Mammary epithelial cell (primary cell): ENCODE measurements at regions of chr11 and their contacts with region 1.

Region 1: DNA sequence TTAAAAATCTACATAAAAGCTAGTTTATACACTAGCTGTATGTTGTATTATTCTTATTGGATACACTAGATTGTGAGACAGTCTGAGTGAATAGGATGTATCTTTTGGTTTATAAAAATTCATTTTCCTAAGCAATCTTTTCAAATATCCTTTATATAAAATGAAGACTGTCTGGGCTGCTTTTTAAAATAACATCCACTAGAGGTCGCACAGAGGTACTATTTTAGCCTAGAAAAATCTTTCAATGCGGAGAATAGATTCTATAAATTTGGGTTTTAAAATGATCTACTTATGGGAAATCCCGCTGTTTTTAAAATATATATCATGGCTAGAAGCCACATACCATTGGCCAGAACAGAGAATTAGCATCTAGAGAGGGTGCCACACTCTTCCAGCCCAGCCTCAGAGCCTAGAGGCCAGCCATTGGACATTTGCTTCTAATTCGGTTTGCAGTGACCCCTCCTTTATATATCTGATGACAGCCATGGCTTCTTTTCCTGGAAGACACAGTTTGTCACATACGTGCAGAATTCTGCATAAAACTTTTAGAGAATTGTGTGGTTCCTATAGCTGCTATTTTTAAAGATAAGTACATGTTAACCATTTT is 7.3 kb downstream of the C11orf97 start:
- DNase-seq: no peak
- H3K4me3 ChIP-seq: no peak overlapping the region
- H3K27ac ChIP-seq: no peak overlapping the region
- H3K4me1 ChIP-seq: peaks cover 2% of the 10 kb centered on the region
- H3K27me3 ChIP-seq: no peaks in the 10 kb centered on the region
- CTCF ChIP-seq: peak; percentile 47 to 56

Region 2: DNA sequence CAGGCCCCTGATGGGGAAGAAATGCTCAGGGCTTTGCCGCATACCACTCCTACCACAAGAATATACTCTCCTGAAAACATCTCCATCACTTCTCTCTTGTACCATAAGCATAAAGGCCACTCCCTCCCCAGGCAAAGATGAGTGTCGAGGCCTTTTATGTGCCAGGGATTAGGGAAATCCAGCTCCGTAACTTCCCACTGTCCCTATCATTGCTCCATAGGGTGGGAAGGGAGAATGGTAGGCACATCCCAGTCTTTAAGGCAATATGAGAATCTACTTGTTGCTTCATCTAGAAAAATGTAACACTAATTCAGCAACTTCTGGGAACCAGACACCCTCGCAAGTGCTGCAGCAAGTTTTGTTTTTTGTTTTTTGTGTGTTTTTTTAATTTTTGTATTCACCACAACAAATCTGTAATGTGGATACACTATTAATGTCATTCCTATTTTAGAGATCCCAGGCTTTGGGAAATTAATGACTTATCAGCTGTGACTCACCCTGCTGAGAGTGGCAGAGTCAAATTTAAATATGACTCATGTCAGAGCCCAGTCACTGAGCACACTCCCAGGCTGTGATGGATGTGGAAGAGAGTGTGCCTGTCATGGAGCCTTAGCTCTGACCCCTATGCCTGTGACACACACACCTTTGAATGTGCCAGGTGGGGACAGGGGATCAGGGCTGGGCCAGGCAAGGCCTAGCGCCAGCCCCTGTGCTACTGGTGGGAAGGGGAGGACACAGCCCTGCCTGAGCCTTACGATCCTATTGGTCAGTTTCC is 367.5 kb before region 1 on chr11:
- CTCF ChIA-PET with region 1: no interaction called
- dilution Hi-C with region 1: no loop called
- in situ Hi-C with region 1: no loop called
- intact Hi-C with region 1: no loop called
- DNase-seq: peak; percentile 87
- H3K4me3 ChIP-seq: no peak overlapping the region
- H3K27ac ChIP-seq: no peak overlapping the region
- H3K4me1 ChIP-seq: peaks cover 54% of the 10 kb centered on the region
- H3K27me3 ChIP-seq: no peaks in the 10 kb centered on the region
- CTCF ChIP-seq: no peak

Region 3: DNA sequence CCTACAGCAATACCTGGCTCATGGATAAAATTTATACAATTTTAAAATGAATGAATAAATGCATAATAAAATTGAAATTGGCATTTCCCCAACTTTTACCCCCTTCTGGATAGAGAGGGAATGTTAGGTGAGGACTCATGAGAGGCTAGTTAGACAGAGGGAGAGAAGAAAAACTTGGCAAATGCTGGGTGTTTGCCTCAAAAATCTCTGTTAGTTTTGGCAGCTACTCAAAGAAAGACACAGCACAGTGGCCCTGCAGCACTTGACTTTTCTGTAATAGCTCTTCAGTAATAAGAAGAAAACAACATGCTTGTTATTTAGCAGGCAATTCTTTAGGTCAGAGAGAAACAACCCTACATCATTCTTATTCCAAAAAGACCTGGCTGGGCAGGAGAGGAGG is 235.9 kb before region 1 on chr11:
- CTCF ChIA-PET with region 1: interaction called, 13 read pairs
- dilution Hi-C with region 1: no loop called
- in situ Hi-C with region 1: no loop called
- intact Hi-C with region 1: no loop called
- DNase-seq: no peak
- H3K4me3 ChIP-seq: no peak overlapping the region
- H3K27ac ChIP-seq: no peak overlapping the region
- H3K4me1 ChIP-seq: no peaks in the 10 kb centered on the region
- H3K27me3 ChIP-seq: peaks cover 7% of the 10 kb centered on the region
- CTCF ChIP-seq: no peak

Region 4: DNA sequence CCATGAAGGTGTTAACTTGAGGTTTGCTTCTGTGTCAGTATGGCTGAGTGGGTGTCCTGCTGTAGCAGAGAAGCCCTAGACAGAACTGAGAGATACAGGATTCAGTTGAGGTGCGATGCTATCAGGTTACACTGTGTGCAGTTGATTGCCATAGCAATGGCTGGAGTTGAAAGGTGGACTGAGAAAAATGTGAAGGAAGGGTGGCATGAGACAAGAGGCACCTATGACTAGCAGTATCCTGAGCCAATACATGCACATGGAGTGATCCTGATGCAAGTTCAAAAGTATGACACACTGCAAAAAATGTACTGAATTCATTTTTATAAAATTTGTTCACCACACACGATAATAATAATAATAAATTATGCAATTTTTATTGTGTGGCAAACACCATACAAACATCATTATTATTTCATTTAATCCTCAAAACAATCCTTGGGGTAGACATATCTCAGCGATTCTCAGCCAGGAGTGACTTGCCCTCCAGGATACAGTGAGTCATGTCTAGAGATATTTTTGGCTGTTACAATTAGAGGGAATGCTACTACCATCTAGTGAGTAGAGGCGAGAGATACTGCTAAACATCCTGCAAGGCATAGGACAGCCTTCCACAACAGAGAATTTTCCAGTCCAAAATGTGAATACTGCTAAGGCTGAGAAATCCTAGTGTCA is 43.7 kb after region 1 on chr11:
- CTCF ChIA-PET with region 1: no interaction called
- dilution Hi-C with region 1: no loop called
- in situ Hi-C with region 1: no loop called
- intact Hi-C with region 1: loop called (anchors 1 kb)
- DNase-seq: peak; percentile 67
- H3K4me3 ChIP-seq: no peak overlapping the region
- H3K27ac ChIP-seq: peak overlapping the region; percentile 5
- H3K4me1 ChIP-seq: peaks cover 12% of the 10 kb centered on the region
- H3K27me3 ChIP-seq: no peaks in the 10 kb centered on the region
- CTCF ChIP-seq: peak; percentile 45 to 56

Region 5: DNA sequence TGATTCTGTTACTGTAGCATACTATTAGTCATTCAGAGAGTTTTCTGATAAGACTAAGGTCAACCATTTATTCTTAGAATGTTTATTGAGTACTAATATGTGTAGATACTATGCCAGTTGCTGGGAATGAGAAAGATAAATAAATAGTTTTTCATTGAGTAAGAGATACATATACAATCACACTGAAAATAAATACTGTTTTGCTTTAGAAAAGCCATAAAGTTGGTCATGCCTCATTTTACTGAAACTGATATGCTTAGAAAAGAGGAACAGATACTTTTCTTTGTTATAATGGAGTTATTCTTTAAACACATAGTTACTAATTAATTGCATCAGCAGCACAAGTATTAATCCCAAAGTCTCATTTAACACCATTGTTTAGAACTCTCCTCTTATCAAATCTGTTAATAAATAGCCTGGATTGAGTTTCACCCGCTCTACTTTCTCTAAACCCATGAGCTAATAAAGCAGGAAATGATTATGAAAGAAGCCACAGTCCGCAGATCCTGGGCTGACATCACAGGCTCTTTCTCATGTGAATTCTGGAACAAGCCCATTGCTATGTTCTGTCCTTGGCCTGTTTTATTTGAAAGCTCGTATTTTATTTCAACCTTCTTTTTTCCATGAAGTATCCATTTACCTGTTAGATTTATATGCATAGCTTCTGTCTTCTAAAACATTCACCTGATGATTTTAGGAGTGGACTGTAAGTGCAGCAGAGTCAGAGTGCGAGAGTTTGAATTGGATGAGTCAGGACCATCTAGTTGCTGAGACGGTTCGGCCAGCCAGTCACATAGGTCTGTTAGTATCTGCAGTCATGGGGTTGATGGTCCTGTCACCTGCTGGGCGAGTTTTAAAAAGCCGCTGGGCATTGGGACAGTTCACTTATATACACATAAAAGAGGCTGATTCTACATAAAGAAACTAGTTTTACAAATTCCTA is 83.1 kb after region 1 on chr11:
- CTCF ChIA-PET with region 1: no interaction called
- dilution Hi-C with region 1: no loop called
- in situ Hi-C with region 1: no loop called
- intact Hi-C with region 1: loop called (anchors 1 kb)
- DNase-seq: peak; percentile 68
- H3K4me3 ChIP-seq: no peak overlapping the region
- H3K27ac ChIP-seq: no peak overlapping the region
- H3K4me1 ChIP-seq: no peaks in the 10 kb centered on the region
- H3K27me3 ChIP-seq: no peaks in the 10 kb centered on the region
- CTCF ChIP-seq: peak; percentile 46 to 53